PC-3 (cell line): ENCODE measurements at regions of chr6 and their contacts with region 1.

Region 1: GRCh38 chr6:40312213-40313015 is 274.8 kb downstream of the LRFN2 start:
- DNase-seq: no peak
- ATAC-seq: no peak
- H3K4me3 ChIP-seq: no peak overlapping the region
- H3K27ac ChIP-seq: no peak overlapping the region
- H3K4me1 ChIP-seq: no peaks in the 10 kb centered on the region
- H3K27me3 ChIP-seq: peaks cover 12% of the 10 kb centered on the region; the same call in 1 of the 2 replicates
- CTCF ChIP-seq: no peak

Region 2: DNA sequence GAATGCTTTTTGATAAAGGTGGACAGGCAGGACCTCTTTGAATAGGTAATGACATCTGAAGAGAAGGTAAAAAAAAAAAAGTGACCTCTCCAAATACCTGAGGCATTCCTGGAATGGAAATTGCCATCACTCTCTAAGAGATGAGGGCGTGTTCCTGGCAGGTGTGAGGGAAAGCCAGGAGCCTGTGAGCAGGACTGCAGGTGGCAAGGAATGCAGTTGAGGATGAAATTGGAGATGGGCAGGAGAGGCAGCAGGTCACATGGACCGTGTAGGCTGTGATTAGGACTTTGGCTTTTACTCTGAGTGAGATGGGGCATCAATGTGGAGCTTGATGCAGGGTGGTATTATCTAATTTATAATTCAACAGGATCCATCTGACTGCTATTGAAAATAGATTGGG is 47.4 kb after region 1 on chr6:
- CTCF ChIA-PET with region 1: no interaction called
- POLR2A ChIA-PET with region 1: no interaction called
- intact Hi-C with region 1: no loop called
- DNase-seq: no peak
- ATAC-seq: no peak
- H3K4me3 ChIP-seq: no peak overlapping the region
- H3K27ac ChIP-seq: no peak overlapping the region
- H3K4me1 ChIP-seq: no peaks in the 10 kb centered on the region
- H3K27me3 ChIP-seq: no peaks in the 10 kb centered on the region
- CTCF ChIP-seq: no peak

Region 3: DNA sequence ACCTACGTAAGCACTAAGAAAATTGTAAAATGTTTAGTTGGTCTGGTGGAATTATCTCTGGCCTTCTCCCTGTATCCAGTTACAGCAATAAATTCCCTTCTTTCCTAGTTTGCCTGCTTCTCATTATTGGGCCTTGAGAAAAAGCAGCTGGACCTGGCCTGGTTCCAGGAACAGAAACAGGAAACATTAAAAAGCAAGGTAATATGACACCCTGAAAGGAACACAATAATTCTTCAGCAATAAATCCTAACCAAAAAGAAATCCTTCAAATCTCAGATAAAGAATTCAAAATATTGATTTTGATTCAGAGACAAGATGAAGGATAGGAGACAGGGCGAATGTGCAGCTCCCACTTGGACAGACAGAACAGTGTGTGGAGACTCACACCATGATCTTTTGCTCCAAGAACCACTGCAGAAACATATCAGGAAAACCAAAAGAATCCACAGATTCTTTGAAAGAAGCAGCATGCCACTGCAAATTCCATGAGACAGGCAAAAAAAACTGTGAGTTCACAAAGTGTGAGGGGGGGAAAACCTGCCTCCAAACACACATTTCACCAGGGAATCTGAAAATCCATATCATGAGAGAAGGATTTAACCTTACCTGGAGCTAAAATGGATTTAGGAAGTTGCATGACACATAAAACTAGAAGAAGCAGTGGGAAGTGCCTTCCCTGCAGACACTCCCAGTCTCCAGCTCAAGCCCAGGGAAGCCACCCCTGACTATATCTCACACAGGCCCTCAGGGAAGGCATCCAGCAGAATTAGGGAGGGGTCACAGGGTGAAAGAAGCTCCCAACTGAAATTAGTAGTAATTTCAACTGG is 945.2 kb after region 1 on chr6:
- CTCF ChIA-PET with region 1: no interaction called
- POLR2A ChIA-PET with region 1: interaction called, 38 read pairs
- intact Hi-C with region 1: no loop called
- DNase-seq: peak; percentile 73
- ATAC-seq: peak; percentile 64
- H3K4me3 ChIP-seq: no peak overlapping the region
- H3K27ac ChIP-seq: no peak overlapping the region
- H3K4me1 ChIP-seq: peaks cover 19% of the 10 kb centered on the region
- H3K27me3 ChIP-seq: peaks cover 5% of the 10 kb centered on the region
- CTCF ChIP-seq: no peak